PC-9 (cell line): ENCODE measurements at regions of chr3 and their contacts with region 1.

Region 1: DNA sequence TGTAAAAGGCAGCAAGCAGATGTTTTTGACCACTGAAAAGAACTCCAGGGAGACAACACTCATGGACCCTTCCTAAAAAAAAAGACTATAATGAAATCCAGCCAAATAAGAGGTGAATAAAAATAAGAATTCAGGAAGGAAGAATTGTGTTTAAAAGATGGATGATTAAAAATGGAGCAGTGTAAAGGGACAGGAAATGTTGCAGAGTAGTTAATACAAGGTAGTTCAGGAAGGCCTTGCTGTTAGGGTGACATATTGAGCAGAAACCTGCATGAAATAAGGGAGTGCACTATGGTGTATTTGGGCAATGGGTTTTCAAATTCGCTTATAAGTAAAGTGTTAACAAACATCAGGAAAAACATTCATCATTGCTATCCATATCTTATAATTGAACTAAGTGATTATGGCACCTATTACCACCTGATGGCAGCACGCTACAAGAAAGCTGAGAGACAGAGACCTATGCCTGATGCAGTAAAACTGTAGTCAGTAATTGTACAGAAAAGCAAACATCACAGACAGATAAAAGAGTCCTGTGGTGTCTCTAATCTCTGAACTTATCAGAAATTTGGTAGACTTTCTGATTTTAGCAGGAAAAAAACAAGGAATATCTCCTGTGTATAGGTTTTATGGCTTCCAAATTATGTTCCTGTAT is 5.8 kb upstream of the DBR1 start:
- DNase-seq: no peak
- H3K4me3 ChIP-seq: no peak overlapping the region
- H3K27ac ChIP-seq: no peak overlapping the region
- H3K4me1 ChIP-seq: peaks cover 7% of the 10 kb centered on the region; the same call in 1 of the 2 replicates
- H3K27me3 ChIP-seq: no peaks in the 10 kb centered on the region
- CTCF ChIP-seq: peak; percentile 62

Region 2: GRCh38 chr3:137970914-137971831 is 209.3 kb before region 1 on chr3:
- CTCF ChIA-PET with region 1: no interaction called
- POLR2A ChIA-PET with region 1: no interaction called
- intact Hi-C with region 1: no loop called
- DNase-seq: peak; percentile 47 to 72
- H3K4me3 ChIP-seq: no peak overlapping the region
- H3K27ac ChIP-seq: no peak overlapping the region
- H3K4me1 ChIP-seq: no peaks in the 10 kb centered on the region
- H3K27me3 ChIP-seq: peaks cover 15% of the 10 kb centered on the region; the same call in 1 of the 2 replicates
- CTCF ChIP-seq: peak; percentile 86

Region 3: GRCh38 chr3:138165061-138165460 is 15.4 kb before region 1 on chr3:
- CTCF ChIA-PET with region 1: no interaction called
- POLR2A ChIA-PET with region 1: no interaction called
- intact Hi-C with region 1: no loop called
- DNase-seq: no peak
- H3K4me3 ChIP-seq: no peak overlapping the region
- H3K27ac ChIP-seq: no peak overlapping the region
- H3K4me1 ChIP-seq: no peaks in the 10 kb centered on the region
- H3K27me3 ChIP-seq: no peaks in the 10 kb centered on the region
- CTCF ChIP-seq: no peak

Region 4: DNA sequence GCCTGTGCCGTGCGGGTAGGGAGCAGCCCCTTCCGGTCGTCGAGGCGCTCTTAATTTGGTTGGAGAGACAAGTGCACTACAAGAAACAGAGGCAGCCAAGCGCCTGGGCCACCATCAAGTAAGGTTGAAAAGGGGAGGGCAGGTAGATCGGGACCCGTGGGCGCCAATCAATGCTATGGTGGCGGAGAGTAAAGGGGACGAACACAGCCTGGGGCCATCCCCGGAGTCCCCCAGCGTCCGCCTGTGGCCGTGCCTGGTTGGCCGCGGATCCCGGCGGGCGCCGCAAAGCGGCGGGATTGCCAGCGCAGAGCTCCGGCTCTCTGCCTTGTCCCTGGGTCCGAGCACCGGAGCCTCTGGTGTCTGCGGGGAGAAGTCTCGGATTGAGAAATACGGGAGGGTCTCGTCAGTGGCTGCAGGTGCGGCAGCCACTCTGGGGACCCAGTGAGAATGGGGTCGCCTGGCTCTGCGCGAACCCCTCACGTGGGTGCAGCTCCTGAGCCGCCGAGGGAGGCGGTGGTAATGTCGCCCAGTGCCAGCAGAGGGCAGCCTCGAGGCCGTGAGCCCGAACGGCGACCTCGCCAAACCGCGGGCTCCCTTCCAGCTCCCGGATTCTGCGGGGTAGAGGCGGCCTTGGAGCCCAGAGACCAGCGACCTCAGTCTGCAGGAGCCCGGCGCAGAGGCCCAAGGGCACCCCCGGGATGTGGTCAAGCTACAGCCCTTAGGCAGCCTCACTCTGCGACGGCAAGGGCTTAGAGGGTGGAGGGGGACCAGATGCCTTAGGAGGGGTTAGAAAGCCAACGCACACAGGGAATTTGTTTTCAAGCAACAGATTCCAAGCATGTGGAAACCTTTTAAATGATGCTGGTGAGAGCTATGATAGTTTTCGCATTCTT is 755.6 kb after region 1 on chr3:
- CTCF ChIA-PET with region 1: no interaction called
- POLR2A ChIA-PET with region 1: no interaction called
- intact Hi-C with region 1: loop called (anchors 5 kb)
- DNase-seq: peak in 1 of 2 experiments; percentile 81
- H3K4me3 ChIP-seq: peak overlapping the region; percentile 76
- H3K27ac ChIP-seq: no peak overlapping the region
- H3K4me1 ChIP-seq: 0 out of 2 replicates have a peak, but pooled peaks cover 6% of the 10 kb centered on the region
- H3K27me3 ChIP-seq: no peaks in the 10 kb centered on the region
- CTCF ChIP-seq: peak; percentile 88